CD8-positive, alpha-beta memory T cell (primary cell): ENCODE measurements at regions of chr1 and their contacts with region 1.

Region 1: DNA sequence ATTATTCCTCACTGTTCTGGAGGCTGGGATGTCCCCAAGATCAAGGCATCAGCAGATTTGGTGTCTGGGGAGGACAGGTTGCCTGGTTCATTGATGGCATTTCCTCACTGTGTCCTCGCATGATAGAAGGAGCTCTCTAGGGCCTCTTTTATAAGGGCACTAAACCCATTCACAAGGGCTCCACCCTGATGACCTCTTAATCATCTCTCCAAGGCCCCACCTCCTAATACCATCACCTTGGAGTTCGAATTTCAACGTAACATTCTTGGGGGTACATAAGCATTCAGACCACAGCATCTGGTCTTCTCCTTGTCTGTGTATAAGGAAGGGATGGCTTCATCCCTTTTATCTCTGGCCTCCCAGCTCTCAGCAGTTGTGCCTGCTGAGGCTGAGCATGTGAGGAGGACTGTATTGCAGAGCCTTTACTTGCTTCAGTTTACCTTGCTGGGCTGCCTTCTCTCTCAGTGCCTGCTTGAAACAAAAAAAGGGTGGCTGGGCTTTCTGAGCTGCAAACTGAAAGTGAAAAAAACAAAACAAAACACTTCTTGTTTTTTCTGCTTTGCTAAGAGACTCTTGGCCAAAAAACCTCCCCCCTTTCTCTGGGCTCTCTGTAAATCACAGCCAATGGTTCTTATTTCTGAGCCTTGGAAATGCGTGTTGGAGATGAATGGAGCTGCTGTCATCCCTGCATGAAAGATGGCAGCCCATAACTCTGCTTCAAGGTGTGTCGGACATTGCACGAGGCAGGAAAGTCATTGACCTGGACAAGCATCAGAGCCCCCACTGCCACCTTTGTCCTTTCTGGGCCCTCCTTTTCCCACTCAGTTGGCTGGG is 75.8 kb downstream of the RHOU start:
- DNase-seq: no peak
- H3K4me3 ChIP-seq: no peak overlapping the region
- H3K4me3 Mint-ChIP-seq: peak overlapping the region in 4 of 7 donors; percentile 4 to 42 (median 26)
- H3K27ac ChIP-seq: no peak overlapping the region
- H3K27ac Mint-ChIP-seq: peak overlapping the region in 7 of 8 donors; percentile 15 to 89 (median 82)
- H3K4me1 ChIP-seq: peaks cover 28% of the 10 kb centered on the region
- H3K4me1 Mint-ChIP-seq: peaks cover 31 to 38% (median 33%) of the 10 kb centered on the region in 3 donors
- H3K27me3 ChIP-seq: no peaks in the 10 kb centered on the region
- H3K27me3 Mint-ChIP-seq: peaks cover 0 to 1% of the 10 kb centered on the region in 2 donors

Region 2: DNA sequence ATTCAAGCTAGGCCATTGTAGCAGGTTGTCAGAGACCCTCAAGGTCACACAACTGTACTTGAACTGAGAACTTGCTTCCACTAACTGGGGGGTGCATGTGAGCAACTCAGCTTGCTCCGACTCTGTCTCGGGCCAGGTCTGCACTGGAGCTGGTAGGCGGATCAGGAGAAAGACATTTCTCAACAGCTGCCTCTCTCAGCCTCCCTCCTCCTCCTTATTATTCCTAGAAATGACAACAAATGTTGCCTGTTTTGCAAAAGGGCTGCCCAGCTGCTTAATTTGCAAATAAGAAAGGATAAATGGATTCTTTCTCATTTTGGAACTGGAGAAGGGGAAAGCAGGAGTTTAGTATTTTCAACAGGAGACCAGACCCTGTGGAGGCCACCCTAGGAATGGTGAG is 64.6 kb after region 1 on chr1:
- CTCF ChIA-PET with region 1: no interaction called
- POLR2A ChIA-PET with region 1: interaction called, 13 read pairs
- DNase-seq: no peak
- H3K4me3 ChIP-seq: no peak overlapping the region
- H3K4me3 Mint-ChIP-seq: no peak overlapping the region
- H3K27ac ChIP-seq: no peak overlapping the region
- H3K27ac Mint-ChIP-seq: no peak overlapping the region
- H3K4me1 ChIP-seq: no peaks in the 10 kb centered on the region
- H3K4me1 Mint-ChIP-seq: peaks cover 5 to 13% (median 6%) of the 10 kb centered on the region in 3 donors
- H3K27me3 ChIP-seq: no peaks in the 10 kb centered on the region
- H3K27me3 Mint-ChIP-seq: peaks cover 0 to 2% of the 10 kb centered on the region in 2 donors

Region 3: DNA sequence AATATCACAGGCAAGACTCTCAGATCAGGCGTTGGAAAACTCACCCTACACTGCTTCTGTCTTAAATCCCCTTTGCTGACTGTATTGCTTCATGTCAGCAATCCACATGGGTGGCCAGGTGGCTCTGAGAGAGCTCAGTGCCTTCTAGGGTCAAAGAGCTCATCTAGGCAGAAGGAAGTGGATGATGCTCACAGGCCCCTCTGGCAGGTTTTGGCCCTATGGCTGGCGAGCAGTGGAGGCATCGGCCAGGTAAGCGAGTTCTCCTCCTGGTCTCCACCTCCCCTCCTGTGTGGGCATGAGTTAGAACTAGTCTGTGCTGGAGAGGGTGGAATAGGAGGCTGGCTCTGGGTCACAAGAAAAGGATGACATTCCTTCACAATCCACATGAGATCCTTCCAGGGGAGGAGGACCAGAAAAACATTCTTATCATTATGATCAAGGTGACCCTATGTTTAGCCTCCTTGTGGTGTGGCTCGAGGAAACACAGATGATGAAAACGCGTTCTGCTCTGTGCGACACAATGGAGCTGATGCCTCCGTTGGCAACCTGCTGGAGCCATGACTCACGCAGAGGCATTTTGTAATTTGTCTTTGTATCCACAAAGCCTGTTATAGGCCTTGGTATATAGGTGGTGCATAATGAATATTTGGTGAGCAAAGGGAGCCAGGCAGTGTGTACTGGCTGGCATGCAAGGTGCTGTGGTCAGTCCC is 195.2 kb after region 1 on chr1:
- CTCF ChIA-PET with region 1: no interaction called
- POLR2A ChIA-PET with region 1: no interaction called
- DNase-seq: no peak
- H3K4me3 ChIP-seq: no peak overlapping the region
- H3K4me3 Mint-ChIP-seq: no peak overlapping the region
- H3K27ac ChIP-seq: no peak overlapping the region
- H3K27ac Mint-ChIP-seq: no peak overlapping the region
- H3K4me1 ChIP-seq: no peaks in the 10 kb centered on the region
- H3K4me1 Mint-ChIP-seq: peaks cover 7 to 23% (median 8%) of the 10 kb centered on the region in 3 donors
- H3K27me3 ChIP-seq: no peaks in the 10 kb centered on the region
- H3K27me3 Mint-ChIP-seq: peaks cover 0 to 2% of the 10 kb centered on the region in 2 donors